ENCODE measurements at regions of chr19 and their contacts with region 1.

Region 1: DNA sequence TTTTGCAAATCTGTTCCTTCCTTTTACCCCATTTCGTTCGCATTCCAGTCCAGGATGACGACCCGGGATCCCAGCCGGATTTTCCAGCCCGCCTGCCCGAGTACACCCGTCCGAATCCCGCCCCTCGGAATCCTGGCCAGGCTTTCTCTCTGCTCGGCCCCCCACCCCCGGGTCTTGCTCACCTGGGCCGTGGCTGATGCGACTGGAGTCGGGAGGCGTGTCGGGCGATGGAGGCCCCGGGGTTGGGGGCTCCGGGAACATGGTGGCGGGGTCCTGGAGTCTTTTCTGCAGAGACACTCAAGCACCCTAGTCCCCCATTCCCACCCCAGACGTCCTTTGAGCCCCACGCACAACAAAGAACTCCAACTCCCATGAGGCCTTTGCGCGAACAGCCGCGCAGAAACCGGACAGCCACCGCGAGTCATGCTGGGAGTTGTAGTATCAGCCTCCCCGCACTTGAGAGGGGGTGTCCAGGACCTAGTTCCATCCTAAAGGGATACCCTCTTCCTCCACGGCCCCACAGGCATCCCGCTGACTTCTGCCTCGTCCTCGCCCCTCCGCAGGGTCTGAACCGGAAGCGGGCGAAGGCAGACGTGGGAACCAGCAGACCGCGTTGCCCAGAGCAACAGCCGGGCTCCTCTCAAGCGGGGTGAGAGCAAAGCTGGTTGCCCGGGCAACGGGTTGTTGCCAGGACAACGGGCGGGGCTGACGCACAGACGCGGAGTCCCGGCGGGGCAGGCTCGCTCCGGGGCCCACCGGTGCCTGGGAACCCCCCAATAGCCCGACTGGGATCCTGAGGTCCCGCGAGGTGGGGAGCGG is 1.1 kb downstream of the SYT5 start:
- DNase-seq: peak; percentile 98
- H3K4me3 Mint-ChIP-seq: peak overlapping the region; percentile 79
- H3K27ac Mint-ChIP-seq: peak overlapping the region; percentile 63
- H3K4me1 Mint-ChIP-seq: peaks cover 20% of the 10 kb centered on the region
- H3K27me3 Mint-ChIP-seq: peaks cover 50% of the 10 kb centered on the region

Region 2: GRCh38 chr19:55156202-55157063 is 22.6 kb before region 1 on chr19:
- intact Hi-C with region 1: no loop called
- DNase-seq: peak; percentile 76
- H3K4me3 Mint-ChIP-seq: peak overlapping the region; percentile 17
- H3K27ac Mint-ChIP-seq: no peak overlapping the region
- H3K4me1 Mint-ChIP-seq: peaks cover 17% of the 10 kb centered on the region
- H3K27me3 Mint-ChIP-seq: peaks cover 27% of the 10 kb centered on the region

Region 3: GRCh38 chr19:55166530-55167268 is 12.3 kb before region 1 on chr19 and contains the start of gene DNAAF3:
- intact Hi-C with region 1: loop called (anchors 1 kb)
- DNase-seq: peak; percentile 93
- H3K4me3 Mint-ChIP-seq: peak within 1 kb of the TSS; percentile 84
- H3K27ac Mint-ChIP-seq: peak within 1 kb of the TSS; percentile 13
- H3K4me1 Mint-ChIP-seq: peaks cover 11% of the 10 kb centered on the region
- H3K27me3 Mint-ChIP-seq: peaks cover 55% of the 10 kb centered on the region
- total RNA-seq, gene DNAAF3: not detected in 2 replicates

Region 4: GRCh38 chr19:55289117-55289796 is 110.3 kb after region 1 on chr19:
- intact Hi-C with region 1: no loop called
- DNase-seq: no peak
- H3K4me3 Mint-ChIP-seq: no peak overlapping the region
- H3K27ac Mint-ChIP-seq: no peak overlapping the region
- H3K4me1 Mint-ChIP-seq: peaks cover 2% of the 10 kb centered on the region
- H3K27me3 Mint-ChIP-seq: no peaks in the 10 kb centered on the region

Region 5: GRCh38 chr19:55552620-55553019 is 373.6 kb after region 1 on chr19:
- intact Hi-C with region 1: no loop called
- DNase-seq: no peak
- H3K4me3 Mint-ChIP-seq: no peak overlapping the region
- H3K27ac Mint-ChIP-seq: no peak overlapping the region
- H3K4me1 Mint-ChIP-seq: no peaks in the 10 kb centered on the region
- H3K27me3 Mint-ChIP-seq: peaks cover 5% of the 10 kb centered on the region

Measured in activated CD4-positive, alpha-beta T cell treated with anti-CD3 and anti-CD28 coated beads, Interleukin-2, amount 10 ng/mL, durations not matched to agents 24 days and 14 days (primary cell).